CD8-positive, alpha-beta T cell (primary cell): ENCODE measurements at regions of chr10 and their contacts with region 1.

Region 1: GRCh38 chr10:470338-470999 is 219.0 kb downstream of the DIP2C start:
- DNase-seq: peak; percentile 22 to 79 (median 51)
- ATAC-seq: peak; percentile 84
- H3K4me3 ChIP-seq: peak overlapping the region; percentile 2 to 14
- H3K4me3 Mint-ChIP-seq: peak overlapping the region; percentile 77
- H3K27ac ChIP-seq: peak overlapping the region; percentile 35 to 39
- H3K27ac Mint-ChIP-seq: peak overlapping the region; percentile 95
- H3K4me1 ChIP-seq: peaks cover 24% of the 10 kb centered on the region
- H3K4me1 Mint-ChIP-seq: peaks cover 29% of the 10 kb centered on the region
- H3K27me3 ChIP-seq: no peaks in the 10 kb centered on the region
- H3K27me3 Mint-ChIP-seq: no peaks in the 10 kb centered on the region
- CTCF ChIP-seq: peak; percentile 42

Region 2: DNA sequence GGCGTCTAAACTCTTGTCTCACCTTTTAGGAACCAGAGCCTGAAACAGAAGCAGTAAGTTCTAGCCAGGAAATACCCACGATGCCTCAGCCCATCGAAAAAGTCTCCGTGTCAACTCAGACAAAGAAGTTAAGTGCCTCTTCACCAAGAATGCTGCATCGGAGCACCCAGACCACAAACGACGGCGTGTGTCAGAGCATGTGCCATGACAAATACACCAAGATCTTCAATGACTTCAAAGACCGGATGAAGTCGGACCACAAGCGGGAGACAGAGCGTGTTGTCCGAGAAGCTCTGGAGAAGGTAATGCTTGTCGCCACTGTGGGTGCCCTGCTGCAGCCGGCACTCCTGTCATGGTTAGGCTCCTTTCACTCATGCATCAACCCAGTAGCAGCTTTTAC is 222.2 kb before region 1 on chr10:
- CTCF ChIA-PET with region 1: no interaction called
- POLR2A ChIA-PET with region 1: no interaction called
- intact Hi-C with region 1: loop called in 1 of 2 experiments (anchors 10 kb)
- DNase-seq: peak in 3 of 9 experiments; percentile 31 to 56 (median 40)
- ATAC-seq: peak; percentile 40
- H3K4me3 ChIP-seq: no peak overlapping the region
- H3K4me3 Mint-ChIP-seq: no peak overlapping the region
- H3K27ac ChIP-seq: no peak overlapping the region
- H3K27ac Mint-ChIP-seq: no peak overlapping the region
- H3K4me1 ChIP-seq: no peaks in the 10 kb centered on the region
- H3K4me1 Mint-ChIP-seq: peaks cover 4% of the 10 kb centered on the region
- H3K27me3 ChIP-seq: no peaks in the 10 kb centered on the region
- H3K27me3 Mint-ChIP-seq: no peaks in the 10 kb centered on the region
- CTCF ChIP-seq: no peak

Region 3: GRCh38 chr10:317271-317769 is 153.1 kb before region 1 on chr10:
- CTCF ChIA-PET with region 1: interaction called, 3 read pairs
- POLR2A ChIA-PET with region 1: no interaction called
- intact Hi-C with region 1: loop called in 1 of 2 experiments (anchors 5 kb)
- DNase-seq: peak in 6 of 9 experiments; percentile 18 to 76 (median 65)
- ATAC-seq: peak; percentile 98
- H3K4me3 ChIP-seq: no peak overlapping the region
- H3K4me3 Mint-ChIP-seq: peak overlapping the region; percentile 30
- H3K27ac ChIP-seq: no peak overlapping the region
- H3K27ac Mint-ChIP-seq: peak overlapping the region; percentile 90
- H3K4me1 ChIP-seq: peaks cover 28% of the 10 kb centered on the region
- H3K4me1 Mint-ChIP-seq: peaks cover 32% of the 10 kb centered on the region
- H3K27me3 ChIP-seq: no peaks in the 10 kb centered on the region
- H3K27me3 Mint-ChIP-seq: no peaks in the 10 kb centered on the region
- CTCF ChIP-seq: no peak

Region 4: DNA sequence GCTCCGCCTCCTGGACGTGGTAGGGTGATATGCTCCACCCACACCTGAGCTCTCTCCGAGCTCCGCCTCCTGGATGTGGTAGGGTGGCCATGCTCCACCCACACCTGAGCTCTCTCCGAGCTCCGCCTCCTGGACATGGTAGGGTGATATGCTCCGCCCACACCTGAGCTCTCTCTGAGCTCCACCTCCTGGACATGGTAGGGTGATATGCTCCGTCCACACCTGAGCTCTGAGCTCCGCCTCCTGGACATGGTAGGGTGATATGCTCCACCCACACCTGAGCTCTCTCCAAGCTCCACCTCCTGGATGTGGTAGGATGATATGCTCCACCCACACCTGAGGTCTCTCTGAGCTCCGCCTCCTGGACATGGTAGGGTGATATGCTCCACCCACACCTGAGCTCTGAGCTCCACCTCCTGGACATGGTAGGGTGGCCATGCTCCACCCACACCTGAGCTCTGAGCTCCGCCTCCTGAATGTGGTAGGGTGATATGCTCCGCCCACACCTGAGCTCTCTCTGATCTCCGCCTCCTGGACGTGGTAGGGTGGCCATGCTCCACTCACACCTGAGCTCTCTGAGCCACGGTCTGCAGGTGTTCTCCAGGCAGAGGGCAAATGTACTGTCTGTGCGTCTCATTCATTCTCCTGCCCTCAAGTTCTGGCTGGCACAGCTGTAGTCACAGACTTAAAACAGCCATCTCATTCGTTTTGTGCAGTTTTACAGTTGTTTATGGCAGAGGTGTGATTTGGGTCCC is 33.4 kb before region 1 on chr10:
- CTCF ChIA-PET with region 1: no interaction called
- POLR2A ChIA-PET with region 1: no interaction called
- intact Hi-C with region 1: loop called in 1 of 2 experiments (anchors 5 kb)
- DNase-seq: peak in 2 of 9 experiments; percentile 15 to 35
- ATAC-seq: no peak
- H3K4me3 ChIP-seq: no peak overlapping the region
- H3K4me3 Mint-ChIP-seq: peak overlapping the region; percentile 23
- H3K27ac ChIP-seq: no peak overlapping the region
- H3K27ac Mint-ChIP-seq: peak overlapping the region; percentile 76
- H3K4me1 ChIP-seq: peaks cover 35% of the 10 kb centered on the region
- H3K4me1 Mint-ChIP-seq: peaks cover 36% of the 10 kb centered on the region
- H3K27me3 ChIP-seq: no peaks in the 10 kb centered on the region
- H3K27me3 Mint-ChIP-seq: no peaks in the 10 kb centered on the region
- CTCF ChIP-seq: no peak

Region 5: DNA sequence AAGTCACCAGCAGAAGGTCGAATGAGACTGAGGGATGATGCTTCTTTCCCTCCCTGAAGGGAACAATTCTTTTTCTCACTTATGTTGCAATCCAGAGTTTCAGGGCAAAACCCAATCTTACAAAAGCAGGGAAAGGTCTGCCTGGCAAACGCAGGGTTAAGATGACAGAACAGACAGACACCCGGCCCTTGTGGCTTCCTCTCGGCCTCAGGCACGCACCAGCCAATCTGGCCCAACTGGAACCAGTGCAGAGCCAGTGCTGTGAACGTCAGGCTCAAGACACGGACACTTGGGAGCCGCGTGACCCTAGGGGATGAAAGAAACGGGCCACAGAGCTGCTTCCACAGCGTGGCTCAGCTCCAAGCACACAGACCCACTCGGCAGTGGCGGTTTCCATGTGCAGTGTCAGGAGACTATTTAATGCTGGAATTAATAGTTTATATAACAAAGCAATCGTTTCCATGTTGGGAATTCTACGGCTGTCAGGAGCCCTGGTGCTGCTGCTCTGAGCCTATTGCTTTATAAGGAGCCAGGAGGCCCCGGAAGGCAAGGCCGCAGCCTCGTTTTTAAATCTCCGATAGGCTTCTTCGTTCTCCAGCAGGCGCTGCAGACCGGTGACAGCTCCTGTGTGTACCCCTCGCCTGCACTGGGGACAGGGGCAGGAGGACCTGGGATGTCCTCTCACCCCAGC is 20.6 kb after region 1 on chr10:
- CTCF ChIA-PET with region 1: no interaction called
- POLR2A ChIA-PET with region 1: no interaction called
- intact Hi-C with region 1: no loop called
- DNase-seq: no peak
- ATAC-seq: no peak
- H3K4me3 ChIP-seq: no peak overlapping the region
- H3K4me3 Mint-ChIP-seq: no peak overlapping the region
- H3K27ac ChIP-seq: no peak overlapping the region
- H3K27ac Mint-ChIP-seq: no peak overlapping the region
- H3K4me1 ChIP-seq: no peaks in the 10 kb centered on the region
- H3K4me1 Mint-ChIP-seq: no peaks in the 10 kb centered on the region
- H3K27me3 ChIP-seq: no peaks in the 10 kb centered on the region
- H3K27me3 Mint-ChIP-seq: peaks cover 14% of the 10 kb centered on the region
- CTCF ChIP-seq: no peak